K562 (cell line): ENCODE measurements at regions of chr11 and their contacts with region 1.

Region 1: GRCh38 chr11:66001942-66002647 is at the starts of genes BANF1 and EIF1AD:
- DNase-seq: peak; percentile 82 to 99 (median 88)
- ATAC-seq: peak; percentile 86
- H3K4me3 ChIP-seq: peak within 1 kb of the TSS; percentile 95
- H3K27ac ChIP-seq: peak within 1 kb of the TSS; percentile 99
- H3K4me1 ChIP-seq: peaks cover 20 to 22% of the 10 kb centered on the region in 2 experiments; a peak in 4 of 5 replicates
- H3K27me3 ChIP-seq: no peaks in the 10 kb centered on the region
- CTCF ChIP-seq: peak in 1 of 3 experiments; percentile 3; a peak in 1 of 6 replicates
- EP300 ChIP-seq: peak; percentile 64
- POLR2A ChIP-seq: peak; percentile 91
- RAD21 ChIP-seq: peak; percentile 2 to 10; a peak in 1 of 4 replicates
- polyA plus RNA-seq, gene BANF1: 631 to 651 TPM
- polyA plus RNA-seq, gene EIF1AD: 66.9 to 98.8 TPM

Region 2: DNA sequence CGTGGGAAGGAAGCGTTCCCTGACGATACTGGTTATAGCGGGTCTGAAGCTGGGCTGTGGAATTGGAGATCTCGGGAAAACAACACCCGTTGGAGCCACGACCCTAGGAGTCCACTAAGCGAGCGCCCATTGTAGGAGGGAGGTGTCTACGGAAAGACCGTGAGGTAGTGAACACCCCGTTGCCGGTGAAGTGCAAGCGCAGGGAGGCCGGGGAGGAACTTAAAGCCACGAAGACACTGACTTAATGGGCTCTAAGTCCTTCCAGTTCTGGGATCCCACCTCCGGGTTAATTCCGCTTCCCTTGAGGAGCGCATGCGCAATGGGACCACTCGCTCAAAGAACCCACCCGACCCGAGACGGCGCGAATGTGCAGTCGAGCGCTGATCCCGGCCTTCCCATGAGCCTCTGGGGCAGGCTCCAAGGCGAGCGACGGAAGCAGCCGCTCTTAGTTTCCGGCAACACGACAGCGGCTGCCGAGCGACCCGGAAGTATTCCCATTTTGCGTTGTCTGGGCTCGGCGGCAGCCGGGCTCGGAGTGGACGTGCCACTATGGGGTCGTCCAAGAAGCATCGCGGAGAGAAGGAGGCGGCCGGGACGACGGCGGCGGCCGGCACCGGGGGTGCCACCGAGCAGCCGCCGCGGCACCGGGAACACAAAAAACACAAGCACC is 40.7 kb before region 1 on chr11 and contains the start of gene SART1:
- CTCF ChIA-PET with region 1: no interaction called
- POLR2A ChIA-PET with region 1: no interaction called
- in situ Hi-C with region 1: no loop called
- intact Hi-C with region 1: loop called (anchors 2 kb)
- DNase-seq: peak; percentile 95 to 99 (median 97)
- ATAC-seq: peak; percentile 97
- H3K4me3 ChIP-seq: peak within 1 kb of the TSS; percentile 100
- H3K27ac ChIP-seq: peak within 1 kb of the TSS; percentile 96
- H3K4me1 ChIP-seq: peaks cover 12 to 39% of the 10 kb centered on the region in 2 experiments; a peak in 4 of 5 replicates
- H3K27me3 ChIP-seq: no peaks in the 10 kb centered on the region
- CTCF ChIP-seq: no peak
- EP300 ChIP-seq: peak; percentile 64; the same call in 1 of the 2 replicates
- POLR2A ChIP-seq: peak; percentile 96
- RAD21 ChIP-seq: no peak; a peak in 2 of 4 replicates
- polyA plus RNA-seq, gene SART1: 4.8 to 7.2 TPM